ENCODE measurements at regions of chr2 and their contacts with region 1.

Region 1: DNA sequence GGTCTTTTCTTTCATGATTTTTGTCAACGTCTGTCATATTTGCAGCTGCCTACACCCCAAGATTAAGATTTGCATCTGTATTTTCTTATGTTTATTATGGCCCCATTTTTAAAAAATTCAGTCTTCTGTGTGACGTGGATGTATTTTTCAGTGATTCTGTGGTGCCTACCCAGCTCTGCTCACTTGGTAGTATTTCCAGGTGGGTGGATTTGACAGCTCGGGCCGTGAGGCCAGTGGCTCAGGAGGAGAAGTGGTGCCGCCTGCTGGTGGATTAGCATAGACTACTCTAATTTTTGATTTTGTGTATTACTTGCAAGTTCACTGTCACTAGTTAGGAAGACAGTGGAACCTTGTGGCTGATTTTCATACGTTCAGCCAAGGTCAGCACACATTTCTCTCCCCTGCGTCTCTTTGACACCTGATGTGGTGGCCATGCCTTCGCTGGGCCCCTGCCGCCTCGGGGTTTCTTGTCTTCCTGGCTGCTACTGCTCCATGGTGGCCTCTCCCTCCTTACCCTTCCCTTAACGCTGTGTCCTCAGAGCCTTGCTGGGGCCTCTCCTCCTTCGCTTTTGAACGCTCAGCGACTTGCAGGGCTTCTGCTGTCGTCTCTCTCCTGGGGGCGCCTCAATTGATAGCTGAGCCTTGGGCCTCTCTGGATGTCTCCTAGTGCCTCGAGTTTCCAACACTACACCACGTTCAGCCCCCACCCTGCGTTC is 89.3 kb downstream of the DGKD start:
- DNase-seq: peak in 1 of 2 experiments; percentile 77
- H3K4me3 ChIP-seq: no peak overlapping the region
- H3K27ac ChIP-seq: no peak overlapping the region
- H3K4me1 ChIP-seq: no peaks in the 10 kb centered on the region; a peak in 1 of 7 replicates
- H3K27me3 ChIP-seq: no peaks in the 10 kb centered on the region
- CTCF ChIP-seq: peak; percentile 57 to 89 (median 80)
- EP300 ChIP-seq: no peak
- POLR2A ChIP-seq: no peak
- RAD21 ChIP-seq: peak; percentile 85 to 91

Region 2: DNA sequence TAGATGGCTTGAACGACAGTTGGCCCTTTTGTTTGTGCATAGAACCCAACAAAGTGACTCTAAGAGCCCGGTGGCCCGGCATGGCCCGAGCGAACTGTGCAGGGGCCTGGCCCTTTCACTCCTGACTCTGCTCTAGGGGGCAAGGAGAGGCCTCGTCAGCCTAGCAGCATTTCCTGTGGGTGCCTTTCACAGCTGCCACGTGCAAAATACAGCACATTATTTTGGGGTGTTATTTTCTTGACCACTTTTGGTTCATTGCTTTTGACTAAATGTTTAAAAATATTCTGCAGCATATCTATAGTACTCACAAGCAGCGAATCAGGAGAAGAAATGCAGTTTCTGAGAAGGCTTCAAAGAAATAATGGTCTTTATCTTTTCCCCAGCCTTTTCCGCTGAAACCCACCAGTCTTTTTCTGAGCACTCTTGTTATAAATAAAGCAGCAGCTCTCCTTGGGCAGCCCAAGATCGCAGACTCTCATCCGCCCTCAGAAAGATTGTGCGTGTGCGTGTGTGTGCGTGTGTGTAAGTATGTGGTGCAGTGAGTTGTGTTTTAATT is 58.1 kb before region 1 on chr2:
- CTCF ChIA-PET with region 1: interaction called, 14 read pairs
- POLR2A ChIA-PET with region 1: no interaction called
- DNase-seq: no peak
- H3K4me3 ChIP-seq: no peak overlapping the region
- H3K27ac ChIP-seq: no peak overlapping the region
- H3K4me1 ChIP-seq: peaks cover 0 to 12% (median 5%) of the 10 kb centered on the region in 4 experiments; a peak in 4 of 7 replicates
- H3K27me3 ChIP-seq: no peaks in the 10 kb centered on the region
- CTCF ChIP-seq: no peak
- EP300 ChIP-seq: no peak
- POLR2A ChIP-seq: no peak
- RAD21 ChIP-seq: no peak

Region 3: DNA sequence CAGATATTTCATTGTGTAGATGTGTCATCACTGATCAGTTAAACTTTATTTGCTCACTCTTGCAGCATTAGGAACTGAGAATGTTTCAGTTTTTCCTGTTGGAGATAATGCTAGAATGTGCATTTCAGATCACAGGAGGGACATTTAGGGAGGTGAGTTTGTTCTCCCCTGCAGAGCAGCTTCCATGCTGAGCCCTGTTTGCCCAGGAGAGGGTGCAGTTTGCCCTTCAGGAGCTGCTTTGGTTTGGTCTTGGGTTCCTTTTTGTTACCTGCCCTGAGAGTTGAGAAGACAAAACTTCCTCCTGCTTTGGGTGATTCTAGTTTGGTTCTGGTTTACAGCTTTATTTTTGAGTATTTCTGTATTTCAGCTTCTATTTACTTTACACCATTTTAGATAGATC is 39.4 kb before region 1 on chr2:
- CTCF ChIA-PET with region 1: interaction called, 77 read pairs
- POLR2A ChIA-PET with region 1: interaction called, 4 read pairs
- DNase-seq: no peak
- H3K4me3 ChIP-seq: no peak overlapping the region
- H3K27ac ChIP-seq: no peak overlapping the region
- H3K4me1 ChIP-seq: peaks cover 5 to 10% (median 6%) of the 10 kb centered on the region in 4 experiments; a peak in 5 of 7 replicates
- H3K27me3 ChIP-seq: no peaks in the 10 kb centered on the region
- CTCF ChIP-seq: peak; percentile 74 to 83 (median 81)
- EP300 ChIP-seq: no peak
- POLR2A ChIP-seq: no peak
- RAD21 ChIP-seq: peak; percentile 74 to 83

Region 4: DNA sequence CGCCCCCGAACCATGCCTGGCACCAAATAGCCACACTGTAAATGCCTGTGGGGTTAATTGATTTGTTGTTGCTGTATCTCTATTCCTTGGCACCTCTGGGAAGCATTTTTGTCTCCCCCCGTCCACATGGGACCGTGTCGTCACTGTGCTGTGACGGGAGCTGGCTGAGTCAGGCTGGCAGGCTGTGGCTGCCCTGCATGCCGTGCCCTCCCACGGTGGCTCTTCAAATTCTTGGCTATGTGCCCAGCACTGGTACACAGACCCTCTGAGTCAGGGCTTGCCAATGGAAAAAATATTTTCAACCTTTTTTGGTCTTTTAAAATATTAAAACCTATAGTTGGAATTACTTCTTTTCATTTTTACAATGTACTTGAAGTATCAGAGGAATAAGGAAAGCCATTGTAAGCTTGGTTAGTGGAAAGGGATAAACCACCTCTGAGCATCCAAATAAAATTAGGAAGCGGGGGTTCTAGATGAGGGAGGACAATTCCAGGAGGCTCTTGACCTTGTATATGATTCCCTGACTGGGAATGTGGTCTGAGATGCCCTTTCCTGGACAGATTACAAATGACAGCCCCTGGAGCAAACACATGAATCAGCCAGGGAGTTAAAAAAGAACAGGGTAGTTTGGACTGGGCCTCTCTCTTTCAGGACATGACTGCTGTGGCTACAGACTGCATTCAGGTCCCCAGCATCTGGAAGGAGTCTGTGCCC is 29.9 kb before region 1 on chr2:
- CTCF ChIA-PET with region 1: interaction called, 26 read pairs
- POLR2A ChIA-PET with region 1: no interaction called
- DNase-seq: peak in 1 of 2 experiments; percentile 22
- H3K4me3 ChIP-seq: no peak overlapping the region
- H3K27ac ChIP-seq: no peak overlapping the region
- H3K4me1 ChIP-seq: no peaks in the 10 kb centered on the region; a peak in 1 of 7 replicates
- H3K27me3 ChIP-seq: no peaks in the 10 kb centered on the region
- CTCF ChIP-seq: no peak
- EP300 ChIP-seq: no peak
- POLR2A ChIP-seq: no peak
- RAD21 ChIP-seq: no peak

Region 5: DNA sequence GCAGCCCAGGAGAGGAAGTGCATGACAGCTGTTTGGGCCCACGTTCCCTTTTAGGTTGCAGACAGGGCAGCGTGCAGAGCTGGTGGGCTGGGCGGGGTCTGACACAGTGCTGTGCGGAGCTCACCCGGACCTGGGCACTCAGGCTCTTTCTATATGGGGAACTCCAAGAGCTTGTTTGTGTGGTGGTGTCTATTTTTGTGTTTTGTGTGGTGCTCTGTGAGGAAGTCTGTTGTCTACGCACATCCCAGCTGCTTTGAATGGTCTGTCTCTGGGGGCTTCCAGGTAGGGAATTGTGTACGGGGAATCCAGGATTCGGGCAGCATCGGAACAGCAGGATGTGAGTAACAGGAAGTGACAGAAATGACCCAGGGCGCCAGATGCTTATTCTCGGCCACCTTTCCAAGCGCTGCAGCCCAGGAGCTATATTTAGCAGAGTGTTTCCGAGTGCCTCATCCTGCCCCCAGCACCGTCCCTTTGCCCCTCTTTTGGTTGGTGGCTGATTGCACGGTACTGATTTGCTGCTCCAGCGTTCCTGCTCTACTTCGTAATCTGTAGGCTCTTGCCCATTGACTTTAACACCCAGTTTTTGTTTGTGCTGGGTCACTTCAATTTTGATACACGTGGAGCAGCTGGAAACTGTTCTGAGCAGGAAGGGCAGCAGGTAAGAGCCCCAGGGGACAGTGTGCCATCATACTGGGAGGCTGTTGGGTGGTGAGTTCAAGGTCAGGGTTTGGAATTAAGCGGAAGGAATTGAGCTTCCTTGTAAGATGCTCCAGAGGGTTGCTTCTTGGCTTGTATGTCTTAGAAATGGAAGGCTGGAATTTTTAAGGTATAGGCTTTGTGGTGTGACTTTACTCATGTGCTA is 24.6 kb before region 1 on chr2:
- CTCF ChIA-PET with region 1: interaction called, 26 read pairs
- POLR2A ChIA-PET with region 1: no interaction called
- DNase-seq: peak in 1 of 2 experiments; percentile 43
- H3K4me3 ChIP-seq: no peak overlapping the region
- H3K27ac ChIP-seq: no peak overlapping the region
- H3K4me1 ChIP-seq: peaks cover 0 to 11% (median 6%) of the 10 kb centered on the region in 4 experiments; a peak in 6 of 7 replicates
- H3K27me3 ChIP-seq: no peaks in the 10 kb centered on the region
- CTCF ChIP-seq: no peak
- EP300 ChIP-seq: no peak
- POLR2A ChIP-seq: no peak
- RAD21 ChIP-seq: no peak

Region 6: DNA sequence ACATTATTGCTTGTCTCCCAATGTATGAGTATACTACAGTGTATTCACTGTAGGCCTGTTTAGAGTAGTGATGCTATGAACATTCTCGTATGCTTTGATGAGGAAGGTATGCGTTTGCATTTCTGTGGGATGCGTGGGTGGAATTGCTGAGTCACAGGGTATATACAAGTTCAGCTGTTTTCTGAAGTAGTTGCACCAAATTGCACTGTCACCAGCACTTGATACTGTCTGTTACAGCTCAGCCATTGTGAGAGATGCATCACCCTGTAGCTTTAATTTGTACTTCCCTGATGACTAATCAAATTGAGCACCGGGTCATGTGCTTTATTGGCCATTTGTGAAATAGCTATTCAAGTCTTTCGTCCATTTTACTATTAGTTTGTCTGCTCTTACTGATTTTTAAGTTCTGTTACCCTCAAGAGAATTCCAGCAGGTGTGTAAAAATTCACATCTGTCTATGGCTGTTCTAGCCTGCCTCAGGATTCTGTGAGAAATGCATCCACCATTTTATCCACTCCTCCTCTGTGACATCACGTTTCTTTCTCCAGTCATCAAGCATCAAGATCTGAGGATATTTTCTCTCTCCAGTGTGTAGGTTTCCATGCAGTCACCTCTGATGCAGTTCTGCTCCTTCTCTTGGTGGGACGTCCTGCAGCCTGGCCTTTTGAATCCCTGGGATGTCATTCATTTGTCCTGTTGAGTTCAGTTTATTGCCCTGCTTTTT is 16.8 kb before region 1 on chr2:
- CTCF ChIA-PET with region 1: interaction called, 12 read pairs
- POLR2A ChIA-PET with region 1: no interaction called
- DNase-seq: peak in 1 of 2 experiments; percentile 26
- H3K4me3 ChIP-seq: no peak overlapping the region
- H3K27ac ChIP-seq: no peak overlapping the region
- H3K4me1 ChIP-seq: peaks cover 0 to 5% (median 0%) of the 10 kb centered on the region in 4 experiments; a peak in 1 of 7 replicates
- H3K27me3 ChIP-seq: no peaks in the 10 kb centered on the region
- CTCF ChIP-seq: no peak
- EP300 ChIP-seq: no peak
- POLR2A ChIP-seq: no peak
- RAD21 ChIP-seq: no peak

Measured in H1 (cell line).